ENCODE measurements at regions of chr17 and their contacts with region 1.

Region 1: DNA sequence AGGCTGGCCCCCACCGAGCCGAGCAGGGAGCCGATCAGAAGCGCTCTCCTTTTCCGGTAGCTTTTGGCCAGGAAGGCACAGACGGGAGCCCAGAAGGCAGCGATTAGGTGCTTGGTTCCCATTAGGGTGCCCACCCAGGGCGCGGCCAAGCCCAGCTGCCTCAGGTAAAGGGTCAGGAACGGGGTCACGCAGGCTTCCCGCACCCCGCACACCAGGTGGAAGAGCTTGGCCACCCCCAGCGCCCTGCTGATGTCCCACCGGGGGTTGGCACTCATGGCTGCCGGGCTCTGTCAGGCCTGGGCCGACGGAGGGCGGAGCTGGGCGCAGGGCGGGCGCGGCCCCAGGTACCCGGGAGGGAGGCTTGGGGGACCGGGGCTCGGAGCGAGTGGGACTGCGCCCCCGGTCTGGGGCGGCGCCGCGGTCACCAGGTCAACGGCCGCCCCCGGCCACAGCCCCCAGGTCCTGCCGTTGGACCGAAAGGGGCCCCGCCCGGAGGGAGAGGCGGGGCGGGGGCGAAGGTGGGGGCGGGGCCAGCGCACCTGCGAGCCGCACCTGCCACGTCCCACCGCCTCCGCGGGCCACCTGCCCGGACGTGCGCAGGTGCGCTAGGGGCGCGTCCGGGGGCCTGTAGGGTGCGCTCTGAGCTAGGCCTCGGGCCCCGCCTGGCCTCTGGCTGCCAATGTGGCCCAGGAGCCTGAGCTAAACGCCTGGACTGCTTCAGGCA is at the start of gene MFSD6L:
- DNase-seq: no peak
- ATAC-seq: peak in 4 of 8 donors; percentile 31 to 67 (median 53)
- H3K4me3 ChIP-seq: no peak within 1 kb of the TSS
- H3K27ac ChIP-seq: no peak within 1 kb of the TSS
- H3K4me1 ChIP-seq: peaks cover 0 to 15% (median 0%) of the 10 kb centered on the region in 9 donors
- H3K27me3 ChIP-seq: peaks cover 0 to 14% (median 9%) of the 10 kb centered on the region in 7 donors
- CTCF ChIP-seq: peak in 2 of 9 donors; percentile 28 to 35
- total RNA-seq, gene MFSD6L: 0.14 to 0.28 (median 0.19) TPM in 3 of 10 donors, not detected in the others

Region 2: DNA sequence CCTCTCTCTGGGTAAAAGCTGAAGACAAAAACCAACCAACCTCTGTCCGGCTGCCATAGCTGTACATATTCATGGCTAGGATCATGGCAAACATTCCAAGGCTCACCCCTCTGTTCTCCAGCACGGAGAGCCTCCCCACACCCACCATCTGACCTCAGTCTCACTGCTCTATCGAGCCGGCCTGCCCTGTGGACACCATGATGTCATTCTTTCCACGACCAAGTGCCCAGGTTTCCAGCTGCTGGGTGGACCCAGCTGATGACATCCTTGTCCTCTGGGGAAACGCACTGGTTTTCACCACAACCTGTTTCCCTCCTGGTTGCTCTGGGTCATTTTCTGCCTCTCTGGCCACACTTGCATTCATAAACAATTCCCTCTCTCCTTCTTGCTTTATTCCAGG is 295.6 kb before region 1 on chr17:
- intact Hi-C with region 1: no loop called
- DNase-seq: peak in 1 of 2 donors; percentile 54
- ATAC-seq: peak in 7 of 8 donors; percentile 74 to 91 (median 88)
- H3K4me3 ChIP-seq: no peak overlapping the region
- H3K27ac ChIP-seq: peak overlapping the region in 6 of 10 donors; percentile 11 to 67 (median 50)
- H3K4me1 ChIP-seq: peaks cover 0 to 14% (median 5%) of the 10 kb centered on the region in 9 donors
- H3K27me3 ChIP-seq: no peaks in the 10 kb centered on the region
- CTCF ChIP-seq: no peak

Region 3: DNA sequence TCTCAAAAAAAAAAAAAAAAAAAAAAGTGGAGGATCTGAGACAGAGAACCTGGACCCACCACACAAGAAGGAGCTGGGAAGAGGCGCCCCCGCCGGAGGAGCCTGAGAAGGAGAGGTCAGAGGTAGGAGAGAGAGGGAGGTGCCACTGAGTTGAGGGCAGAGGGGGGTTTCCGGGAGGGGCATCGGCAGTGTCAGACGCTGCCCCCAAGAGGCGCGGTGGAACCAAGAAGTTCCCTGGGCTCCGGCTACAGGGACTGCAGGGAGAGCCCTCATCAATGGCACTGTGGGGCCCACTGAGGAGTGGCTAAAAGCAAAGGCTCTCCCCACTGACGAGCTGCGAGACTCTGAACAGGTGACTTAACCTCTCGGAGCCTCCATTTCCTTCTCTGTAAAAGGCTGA is 58.5 kb before region 1 on chr17:
- intact Hi-C with region 1: loop called in 1 of 10 experiments (anchors 10 kb)
- DNase-seq: no peak
- ATAC-seq: no peak
- H3K4me3 ChIP-seq: peak overlapping the region in 1 of 10 donors; percentile 23
- H3K27ac ChIP-seq: no peak overlapping the region
- H3K4me1 ChIP-seq: peaks cover 0 to 6% (median 0%) of the 10 kb centered on the region in 9 donors
- H3K27me3 ChIP-seq: peaks cover 0 to 4% (median 0%) of the 10 kb centered on the region in 7 donors
- CTCF ChIP-seq: no peak

Region 4: GRCh38 chr17:8922451-8922850 is 123.4 kb after region 1 on chr17:
- intact Hi-C with region 1: no loop called
- DNase-seq: no peak
- ATAC-seq: peak; percentile 12 to 87 (median 74)
- H3K4me3 ChIP-seq: no peak overlapping the region
- H3K27ac ChIP-seq: peak overlapping the region in 3 of 10 donors; percentile 31 to 86 (median 51)
- H3K4me1 ChIP-seq: peaks cover 0 to 37% (median 0%) of the 10 kb centered on the region in 9 donors
- H3K27me3 ChIP-seq: peaks cover 0 to 27% (median 6%) of the 10 kb centered on the region in 7 donors
- CTCF ChIP-seq: no peak